ENCODE measurements at regions of chr6 and their contacts with region 1.

Region 1: GRCh38 chr6:44655412-44656342 is 268.2 kb downstream of the CDC5L start:
- DNase-seq: peak; percentile 79
- CTCF ChIP-seq: peak; percentile 96

Region 2: GRCh38 chr6:44475779-44476434 is 179.8 kb before region 1 on chr6:
- CTCF ChIA-PET with region 1: interaction called, 11 read pairs
- POLR2A ChIA-PET with region 1: no interaction called
- DNase-seq: peak; percentile 87
- CTCF ChIP-seq: peak; percentile 91

Region 3: DNA sequence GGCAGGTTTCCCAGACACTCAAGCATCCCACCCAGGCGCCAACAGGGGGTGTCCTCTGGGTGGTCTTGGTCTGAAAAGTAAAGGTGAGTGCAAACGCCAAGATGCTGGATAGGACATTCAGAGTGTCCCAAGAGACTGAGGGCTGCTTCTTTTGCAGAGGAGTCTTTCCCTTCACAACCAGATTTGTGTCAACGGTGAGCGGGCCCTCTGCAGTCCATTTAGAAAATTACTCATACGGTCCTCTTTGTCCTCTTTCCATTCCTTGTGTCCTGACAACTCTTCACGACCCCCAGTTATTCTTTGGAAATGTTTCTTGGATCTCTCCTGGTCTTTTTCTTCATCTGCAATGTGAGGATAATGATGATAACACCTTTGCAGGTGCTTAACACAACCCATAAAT is 10.4 kb before region 1 on chr6:
- CTCF ChIA-PET with region 1: interaction called, 21 read pairs
- POLR2A ChIA-PET with region 1: no interaction called
- DNase-seq: no peak
- CTCF ChIP-seq: no peak

Region 4: DNA sequence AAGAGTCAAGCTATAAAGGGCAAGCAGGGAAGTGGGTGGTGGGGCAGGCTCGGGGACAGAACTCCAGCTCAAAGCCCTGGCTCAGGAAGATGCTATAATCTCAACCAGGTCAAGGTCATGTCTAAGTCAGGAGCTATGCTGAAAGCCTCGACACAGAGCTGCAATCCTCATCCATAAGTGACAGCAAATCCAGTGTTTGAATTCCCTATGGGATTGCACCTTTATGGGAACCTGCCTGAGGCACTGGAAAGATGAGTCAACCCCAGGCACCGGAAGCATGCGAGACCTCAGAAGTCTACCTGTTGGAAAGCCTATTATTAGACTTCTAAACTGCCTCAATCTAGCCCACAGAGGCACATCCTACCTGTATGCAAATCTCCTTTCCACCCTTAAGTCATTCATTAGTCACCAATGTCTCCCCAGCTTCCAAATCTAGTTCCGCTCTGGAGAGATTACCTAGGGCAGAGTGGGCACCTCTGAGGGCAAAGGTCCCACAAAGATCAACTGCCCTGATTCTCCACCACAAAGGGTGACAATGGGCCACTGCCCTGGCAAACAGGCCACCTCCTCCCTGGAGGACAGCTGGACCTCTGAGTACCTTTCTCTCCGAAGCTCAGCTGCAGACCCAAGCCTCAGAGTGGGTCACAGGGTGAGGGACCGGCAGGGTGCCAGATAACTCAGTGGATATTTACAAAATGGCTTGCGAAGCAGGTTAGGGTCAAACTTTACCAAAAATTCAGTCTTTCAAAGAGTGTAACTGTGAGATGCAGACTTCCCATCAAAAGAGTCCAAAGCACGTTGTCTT is 18.9 kb after region 1 on chr6:
- CTCF ChIA-PET with region 1: interaction called, 58 read pairs
- POLR2A ChIA-PET with region 1: no interaction called
- DNase-seq: no peak
- CTCF ChIP-seq: no peak

Region 5: GRCh38 chr6:45714741-45715507 is 1059.2 kb after region 1 on chr6:
- CTCF ChIA-PET with region 1: interaction called, 16 read pairs
- POLR2A ChIA-PET with region 1: no interaction called
- DNase-seq: peak; percentile 60
- CTCF ChIP-seq: peak; percentile 66